ENCODE measurements at regions of chr5 and their contacts with region 1.

Region 1: DNA sequence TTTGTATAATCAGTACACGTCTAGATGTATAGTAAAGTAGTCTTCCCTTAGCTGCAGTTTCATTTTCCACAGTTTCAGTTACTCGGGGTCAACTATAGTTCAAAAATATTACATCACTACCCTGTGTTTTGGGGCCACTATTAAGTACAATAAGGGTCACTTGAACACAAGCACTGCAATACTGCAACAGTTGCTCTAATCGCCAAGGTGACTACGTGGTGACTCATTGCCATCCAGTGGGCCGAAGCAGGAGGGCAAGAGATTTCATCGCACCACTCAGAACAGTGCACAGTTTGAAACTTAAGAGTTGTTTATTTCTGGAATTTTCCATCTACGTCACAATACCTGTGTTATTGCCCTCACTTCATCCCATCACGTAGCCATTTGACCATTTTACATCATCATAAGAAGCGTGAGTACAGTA is at the start of gene ARL14EPL:
- DNase-seq: no peak
- ATAC-seq: peak; percentile 95
- H3K4me3 ChIP-seq: no peak within 1 kb of the TSS
- H3K27ac ChIP-seq: no peak within 1 kb of the TSS
- H3K4me1 ChIP-seq: peaks cover 13% of the 10 kb centered on the region; the same call in 1 of the 2 replicates
- H3K27me3 ChIP-seq: no peaks in the 10 kb centered on the region; a peak in 1 of 4 replicates
- CTCF ChIP-seq: peak; percentile 29 to 56 (median 53); a peak in 4 of 6 replicates
- EP300 ChIP-seq: no peak
- POLR2A ChIP-seq: no peak
- RAD21 ChIP-seq: peak; percentile 82
- polyA plus RNA-seq, gene ARL14EPL: not detected

Region 2: DNA sequence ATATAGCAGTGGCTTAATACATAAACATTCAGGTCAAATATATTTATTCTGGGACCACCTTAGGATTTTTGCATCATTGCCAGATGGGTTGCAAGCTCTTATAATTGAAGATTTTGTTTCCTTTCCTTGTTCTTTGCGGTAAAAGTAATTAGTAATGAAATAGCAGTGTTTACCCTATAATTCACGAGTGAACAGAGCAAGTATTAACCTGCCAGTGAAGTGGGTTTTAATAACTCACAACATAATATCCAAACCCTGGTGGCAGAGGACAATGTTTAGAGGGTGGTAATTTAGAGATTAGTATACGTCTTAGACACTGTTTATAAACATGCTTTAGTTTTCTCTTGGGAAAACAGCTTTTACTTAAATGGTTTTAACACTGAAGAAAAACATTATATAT is 12.0 kb after region 1 on chr5:
- CTCF ChIA-PET with region 1: interaction called, 4 read pairs
- POLR2A ChIA-PET with region 1: no interaction called
- RAD21 ChIA-PET with region 1: no interaction called
- SMC1A ChIA-PET with region 1: interaction called, 12 read pairs
- in situ Hi-C with region 1: no loop called
- intact Hi-C with region 1: no loop called
- DNase-seq: no peak
- ATAC-seq: no peak
- H3K4me3 ChIP-seq: no peak overlapping the region
- H3K27ac ChIP-seq: no peak overlapping the region
- H3K4me1 ChIP-seq: no peaks in the 10 kb centered on the region
- H3K27me3 ChIP-seq: no peaks in the 10 kb centered on the region; a peak in 1 of 4 replicates
- CTCF ChIP-seq: no peak
- EP300 ChIP-seq: no peak
- POLR2A ChIP-seq: no peak
- RAD21 ChIP-seq: no peak

Region 3: GRCh38 chr5:116076496-116076895 is 44.4 kb after region 1 on chr5:
- CTCF ChIA-PET with region 1: interaction called, 3 read pairs
- POLR2A ChIA-PET with region 1: no interaction called
- RAD21 ChIA-PET with region 1: interaction called, 6 read pairs
- SMC1A ChIA-PET with region 1: interaction called, 10 read pairs
- in situ Hi-C with region 1: no loop called
- intact Hi-C with region 1: no loop called
- DNase-seq: peak; percentile 79
- ATAC-seq: peak; percentile 98
- H3K4me3 ChIP-seq: no peak overlapping the region
- H3K27ac ChIP-seq: no peak overlapping the region
- H3K4me1 ChIP-seq: peaks cover 18% of the 10 kb centered on the region
- H3K27me3 ChIP-seq: no peaks in the 10 kb centered on the region
- CTCF ChIP-seq: no peak
- EP300 ChIP-seq: peak in 1 of 2 experiments; percentile 60; a peak in 2 of 4 replicates
- POLR2A ChIP-seq: no peak
- RAD21 ChIP-seq: no peak

Measured in GM12878 (cell line).